ENCODE measurements at regions of chr5 and their contacts with region 1.

Region 1: DNA sequence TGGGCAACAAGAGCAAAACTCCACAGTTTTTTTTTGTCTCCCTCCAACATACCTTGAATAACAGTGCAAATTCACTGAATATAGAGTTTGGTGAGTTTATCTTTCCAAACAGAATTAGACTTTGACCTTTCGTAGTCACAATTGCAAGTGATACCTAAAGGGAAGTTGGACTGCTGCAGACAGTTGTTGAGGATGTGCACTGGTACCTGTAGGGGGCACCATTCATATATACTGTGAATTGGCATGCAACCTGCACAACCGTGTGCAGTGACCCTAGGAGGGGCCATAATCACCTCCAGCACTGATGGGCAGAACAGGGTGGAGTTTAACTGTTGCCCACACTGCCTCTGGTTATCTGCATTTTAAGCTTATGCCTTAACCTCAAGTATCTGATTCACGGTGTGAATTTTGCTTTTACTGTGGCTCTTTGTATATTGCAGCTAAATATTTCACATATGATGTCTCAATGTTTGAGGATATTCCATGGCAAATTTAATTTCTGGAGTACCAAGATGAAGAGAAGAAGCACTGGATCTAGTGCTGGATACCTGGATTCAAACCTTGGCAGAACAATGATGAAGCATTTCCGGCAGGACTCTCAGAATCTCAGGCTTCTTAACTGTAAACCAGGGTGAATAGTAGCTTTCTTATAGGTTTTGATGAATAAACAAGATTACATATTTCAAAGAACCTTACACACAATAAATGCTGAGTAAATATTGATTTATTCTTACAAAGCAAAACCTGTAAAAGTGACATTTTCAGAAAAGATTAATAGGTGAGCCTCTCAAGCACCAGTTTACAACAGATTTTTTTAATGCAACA is 144.3 kb downstream of the ACTBL2 start:
- DNase-seq: peak; percentile 71
- ATAC-seq: peak; percentile 95
- H3K4me3 ChIP-seq: no peak overlapping the region
- H3K27ac ChIP-seq: no peak overlapping the region
- H3K4me1 ChIP-seq: peaks cover 22% of the 10 kb centered on the region
- H3K27me3 ChIP-seq: no peaks in the 10 kb centered on the region
- CTCF ChIP-seq: peak; percentile 67
- EP300 ChIP-seq: no peak
- POLR2A ChIP-seq: no peak
- RAD21 ChIP-seq: peak; percentile 33; the same call in 1 of the 2 replicates

Region 2: GRCh38 chr5:57128325-57128724 is 210.0 kb before region 1 on chr5:
- CTCF ChIA-PET with region 1: no interaction called
- POLR2A ChIA-PET with region 1: no interaction called
- in situ Hi-C with region 1: no loop called
- intact Hi-C with region 1: no loop called
- DNase-seq: peak; percentile 54
- ATAC-seq: peak; percentile 76
- H3K4me3 ChIP-seq: no peak overlapping the region
- H3K27ac ChIP-seq: no peak overlapping the region
- H3K4me1 ChIP-seq: peaks cover 16% of the 10 kb centered on the region
- H3K27me3 ChIP-seq: no peaks in the 10 kb centered on the region
- CTCF ChIP-seq: no peak
- EP300 ChIP-seq: no peak
- POLR2A ChIP-seq: no peak
- RAD21 ChIP-seq: no peak

Region 3: GRCh38 chr5:57432876-57433275 is 94.6 kb after region 1 on chr5:
- CTCF ChIA-PET with region 1: no interaction called
- POLR2A ChIA-PET with region 1: no interaction called
- in situ Hi-C with region 1: no loop called
- intact Hi-C with region 1: loop called (anchors 1 kb)
- DNase-seq: peak; percentile 28
- ATAC-seq: peak; percentile 72
- H3K4me3 ChIP-seq: no peak overlapping the region
- H3K27ac ChIP-seq: no peak overlapping the region
- H3K4me1 ChIP-seq: no peaks in the 10 kb centered on the region
- H3K27me3 ChIP-seq: no peaks in the 10 kb centered on the region
- CTCF ChIP-seq: peak; percentile 44
- EP300 ChIP-seq: no peak
- POLR2A ChIP-seq: no peak
- RAD21 ChIP-seq: no peak

Region 4: GRCh38 chr5:57772512-57772911 is 434.2 kb after region 1 on chr5:
- CTCF ChIA-PET with region 1: no interaction called
- POLR2A ChIA-PET with region 1: no interaction called
- in situ Hi-C with region 1: no loop called
- intact Hi-C with region 1: no loop called
- DNase-seq: no peak
- ATAC-seq: no peak
- H3K4me3 ChIP-seq: no peak overlapping the region
- H3K27ac ChIP-seq: no peak overlapping the region
- H3K4me1 ChIP-seq: peaks cover 22% of the 10 kb centered on the region
- H3K27me3 ChIP-seq: peaks cover 0 to 3% of the 10 kb centered on the region in 2 experiments; a peak in 1 of 5 replicates
- CTCF ChIP-seq: no peak
- EP300 ChIP-seq: no peak
- POLR2A ChIP-seq: no peak
- RAD21 ChIP-seq: no peak

Measured in HepG2 (cell line).